Activated T-helper 1 cell treated with anti-CD3 and anti-CD28 coated beads, Interleukin-12 subunit alpha, Interleukin-12 subunit beta, Interleukin-2, Interleukin-4 antibody, amounts not matched to agents 30 ng/mL and 10 ng/mL and 1 ng/mL, durations not matched to agents 14 hours and 24 hours and 36 hours (primary cell): ENCODE measurements at regions of chr14 and their contacts with region 1.

Region 1: DNA sequence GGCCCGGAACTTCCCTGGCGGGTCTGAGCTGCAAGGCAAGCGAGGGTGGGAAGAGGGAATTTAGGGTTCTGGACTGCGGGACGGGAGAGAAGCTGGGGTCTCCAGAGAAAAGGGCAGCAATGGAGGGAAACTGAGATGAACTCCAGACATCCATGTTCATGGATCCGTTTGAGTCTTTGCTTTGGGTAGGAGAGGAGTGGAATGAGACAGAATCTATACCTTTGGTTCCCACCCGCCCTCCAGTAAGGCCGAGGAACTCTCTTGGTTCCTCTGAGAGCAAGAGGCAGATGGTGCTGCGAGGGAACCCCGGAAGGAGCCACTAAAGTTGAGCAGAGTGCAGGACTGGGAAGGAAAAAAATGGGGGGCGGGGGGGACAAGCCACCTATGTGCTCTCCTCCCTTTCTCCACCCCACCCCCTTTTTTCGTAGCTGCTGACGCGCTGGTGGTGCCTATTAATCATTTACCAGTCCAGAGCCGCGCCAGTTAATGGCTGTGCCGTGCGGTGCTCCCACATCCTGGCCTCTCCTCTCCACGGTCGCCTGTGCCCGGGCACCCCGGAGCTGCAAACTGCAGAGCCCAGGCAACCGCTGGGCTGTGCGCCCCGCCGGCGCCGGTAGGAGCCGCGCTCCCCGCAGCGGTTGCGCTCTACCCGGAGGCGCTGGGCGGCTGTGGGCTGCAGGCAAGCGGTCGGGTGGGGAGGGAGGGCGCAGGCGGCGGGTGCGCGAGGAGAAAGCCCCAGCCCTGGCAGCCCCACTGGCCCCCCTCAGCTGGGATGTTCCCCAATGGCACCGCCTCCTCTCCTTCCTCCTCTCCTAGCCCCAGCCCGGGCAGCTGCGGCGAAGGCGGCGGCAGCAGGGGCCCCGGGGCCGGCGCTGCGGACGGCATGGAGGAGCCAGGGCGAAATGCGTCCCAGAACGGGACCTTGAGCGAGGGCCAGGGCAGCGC is 1.2 kb downstream of the SSTR1 start:
- DNase-seq: no peak
- H3K4me3 Mint-ChIP-seq: no peak overlapping the region
- H3K27ac Mint-ChIP-seq: peak overlapping the region; percentile 23
- H3K4me1 Mint-ChIP-seq: peaks cover 3% of the 10 kb centered on the region
- H3K27me3 Mint-ChIP-seq: peaks cover 52% of the 10 kb centered on the region

Region 2: DNA sequence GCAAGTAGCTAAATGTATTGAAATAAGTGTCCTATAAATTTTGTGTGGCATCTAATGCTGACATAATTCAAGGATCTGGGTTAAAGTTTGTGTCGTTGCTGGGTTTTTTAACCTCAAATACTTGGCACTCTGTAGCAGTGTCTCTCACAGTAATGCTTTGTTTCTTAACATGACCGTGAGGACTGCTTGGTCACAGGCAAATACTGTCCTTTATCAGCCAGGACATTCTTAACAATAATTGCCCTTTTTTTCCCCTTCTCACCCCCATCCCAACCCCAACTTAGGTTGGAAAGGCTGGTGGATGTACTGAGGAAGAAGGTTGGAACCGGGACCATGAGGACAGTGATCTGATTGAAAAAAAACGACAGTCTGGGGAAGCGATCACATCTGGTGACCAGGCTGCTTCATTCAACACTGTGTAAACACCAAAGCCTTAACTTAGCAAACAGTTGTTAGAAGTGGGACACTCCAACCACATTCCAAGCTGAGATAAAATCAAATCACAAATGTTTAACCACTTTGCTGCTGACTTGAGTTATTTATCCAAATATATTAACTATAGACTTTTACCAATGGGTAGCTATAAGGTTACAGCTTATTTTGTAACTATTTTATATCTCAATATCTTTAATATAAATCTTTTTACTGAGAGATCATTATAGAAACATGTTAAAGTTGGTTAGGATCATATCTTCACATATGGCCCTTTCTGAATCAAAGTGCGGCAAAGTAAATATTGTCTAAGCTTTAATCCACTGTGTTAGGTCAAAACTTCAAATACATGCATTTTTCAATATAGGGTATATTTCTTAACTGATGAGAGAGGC is 662.1 kb before region 1 on chr14:
- intact Hi-C with region 1: no loop called
- DNase-seq: no peak
- H3K4me3 Mint-ChIP-seq: no peak overlapping the region
- H3K27ac Mint-ChIP-seq: no peak overlapping the region
- H3K4me1 Mint-ChIP-seq: no peaks in the 10 kb centered on the region
- H3K27me3 Mint-ChIP-seq: no peaks in the 10 kb centered on the region

Region 3: GRCh38 chr14:37599507-37600368 is 609.2 kb before region 1 on chr14:
- intact Hi-C with region 1: loop called (anchors 5 kb)
- DNase-seq: no peak
- H3K4me3 Mint-ChIP-seq: no peak overlapping the region
- H3K27ac Mint-ChIP-seq: no peak overlapping the region
- H3K4me1 Mint-ChIP-seq: no peaks in the 10 kb centered on the region
- H3K27me3 Mint-ChIP-seq: peaks cover 51% of the 10 kb centered on the region

Region 4: GRCh38 chr14:37707690-37708089 is 501.2 kb before region 1 on chr14:
- intact Hi-C with region 1: no loop called
- DNase-seq: no peak
- H3K4me3 Mint-ChIP-seq: no peak overlapping the region
- H3K27ac Mint-ChIP-seq: no peak overlapping the region
- H3K4me1 Mint-ChIP-seq: no peaks in the 10 kb centered on the region
- H3K27me3 Mint-ChIP-seq: no peaks in the 10 kb centered on the region

Region 5: GRCh38 chr14:38255673-38256532 is 47.0 kb after region 1 on chr14 and contains the start of gene CLEC14A:
- intact Hi-C with region 1: loop called (anchors 5 kb)
- DNase-seq: no peak
- H3K4me3 Mint-ChIP-seq: peak within 1 kb of the TSS; percentile 56
- H3K27ac Mint-ChIP-seq: no peak within 1 kb of the TSS
- H3K4me1 Mint-ChIP-seq: peaks cover 10% of the 10 kb centered on the region
- H3K27me3 Mint-ChIP-seq: peaks cover 33% of the 10 kb centered on the region
- total RNA-seq, gene CLEC14A: not detected in 2 replicates